Gastrocnemius medialis (tissue), 4 donors: ENCODE measurements at regions of chr16 and their contacts with region 1.

Region 1: DNA sequence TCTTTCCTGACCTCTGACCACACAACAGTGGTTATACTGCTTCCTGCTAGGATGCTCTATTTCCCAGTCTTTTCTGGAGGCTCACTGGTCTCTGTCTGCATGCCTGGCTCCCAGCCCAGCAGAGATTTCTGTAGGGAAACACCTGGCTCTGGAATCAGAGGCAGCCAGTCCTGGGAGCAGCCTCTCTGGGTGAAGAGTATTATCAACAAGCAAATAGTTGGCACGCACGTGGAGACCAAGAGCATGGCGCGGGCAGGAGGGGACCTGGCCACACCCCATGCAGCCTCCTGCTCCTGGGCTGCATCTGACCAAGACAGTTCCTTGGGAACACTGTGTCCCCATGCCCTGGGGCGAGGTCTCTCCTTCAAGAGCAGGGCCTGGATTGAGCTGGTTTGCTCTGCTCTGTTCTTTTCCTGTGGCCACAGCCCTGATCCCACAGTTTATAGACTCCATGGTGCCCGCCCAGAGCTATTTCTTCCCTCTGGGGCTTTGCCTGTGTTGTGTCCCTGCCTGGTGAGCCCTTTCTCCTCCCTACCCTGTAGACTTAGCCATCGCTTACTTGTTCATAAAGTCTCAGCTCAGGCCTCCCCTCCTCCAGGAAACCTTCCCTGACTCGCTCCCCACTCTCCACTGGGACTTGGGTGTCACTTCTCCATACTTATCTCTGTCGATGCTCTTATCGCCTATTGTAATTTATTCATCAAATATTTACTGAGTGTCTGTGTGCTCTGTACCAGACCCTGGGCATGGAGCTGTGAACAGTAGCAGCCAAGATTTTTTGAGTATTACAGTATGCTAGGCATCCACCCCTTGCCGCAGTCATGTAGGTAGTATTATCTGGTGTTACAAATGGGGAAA is 60.6 kb downstream of the SCNN1B start:
- DNase-seq: peak; percentile 64 to 68
- ATAC-seq: peak; percentile 65 to 71
- H3K4me3 ChIP-seq: no peak overlapping the region
- H3K27ac ChIP-seq: peak overlapping the region in 3 of 4 donors; percentile 66 to 78 (median 69)
- H3K4me1 ChIP-seq: peaks cover 6 to 24% of the 10 kb centered on the region in 2 donors
- H3K27me3 ChIP-seq: no peaks in the 10 kb centered on the region
- CTCF ChIP-seq: no peak
- POLR2A ChIP-seq: no peak

Region 2: GRCh38 chr16:23403547-23403946 is 40.9 kb after region 1 on chr16:
- in situ Hi-C with region 1: no loop called
- intact Hi-C with region 1: loop called (anchors 5 kb)
- DNase-seq: no peak
- ATAC-seq: no peak
- H3K4me3 ChIP-seq: no peak overlapping the region
- H3K27ac ChIP-seq: peak overlapping the region in 2 of 4 donors; percentile 25 to 34
- H3K4me1 ChIP-seq: peaks cover 11 to 23% of the 10 kb centered on the region in 2 donors
- H3K27me3 ChIP-seq: no peaks in the 10 kb centered on the region
- CTCF ChIP-seq: no peak
- POLR2A ChIP-seq: no peak

Region 3: DNA sequence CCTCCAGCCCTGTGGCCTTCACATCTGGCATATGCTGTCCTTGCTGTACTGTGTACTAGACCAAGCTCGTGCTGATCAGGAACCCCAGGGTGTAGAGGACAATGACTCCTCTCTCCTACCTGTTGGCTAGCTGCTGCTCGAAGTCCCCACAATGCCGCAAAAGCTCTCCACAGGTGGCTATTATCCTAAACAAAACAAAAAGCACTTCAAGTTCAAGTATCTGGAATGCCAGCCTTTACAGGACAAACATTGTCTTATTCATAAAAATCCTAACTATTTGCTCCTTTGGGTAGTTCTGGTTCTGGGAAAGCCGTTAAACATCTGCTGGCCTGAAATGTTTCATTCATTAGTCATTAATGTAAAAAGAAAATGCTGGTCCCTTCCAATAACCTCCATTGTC is 47.5 kb after region 1 on chr16:
- in situ Hi-C with region 1: no loop called
- intact Hi-C with region 1: loop called (anchors 5 kb)
- DNase-seq: no peak
- ATAC-seq: no peak
- H3K4me3 ChIP-seq: no peak overlapping the region
- H3K27ac ChIP-seq: no peak overlapping the region
- H3K4me1 ChIP-seq: peaks cover 15 to 17% of the 10 kb centered on the region in 2 donors
- H3K27me3 ChIP-seq: no peaks in the 10 kb centered on the region
- CTCF ChIP-seq: no peak
- POLR2A ChIP-seq: no peak

Region 4: DNA sequence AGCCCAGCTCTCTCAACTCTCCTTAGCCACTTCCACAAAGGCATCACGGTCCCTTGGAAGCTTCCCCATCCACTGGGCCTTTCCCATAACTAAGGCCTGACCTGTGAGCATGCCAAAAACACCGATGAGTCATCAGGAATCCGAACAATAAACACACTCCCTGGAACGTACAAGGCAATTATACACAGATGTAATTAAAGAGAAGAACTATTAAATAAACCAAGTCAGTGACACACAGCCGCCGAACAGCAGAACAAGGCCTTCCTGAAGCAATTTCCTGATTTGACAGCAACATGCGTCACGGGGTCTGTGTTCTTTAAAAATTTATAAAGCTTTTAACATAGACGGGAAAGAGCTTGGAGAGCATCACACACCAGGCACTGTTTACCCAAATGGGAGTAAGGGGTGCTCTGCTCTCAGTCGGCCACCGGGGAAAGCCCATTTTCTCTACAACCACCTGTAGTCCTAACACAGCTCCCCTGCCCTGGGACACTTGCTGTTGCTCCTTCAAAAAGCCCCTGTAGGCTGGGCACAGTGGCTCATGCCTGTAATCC is 60.9 kb after region 1 on chr16:
- in situ Hi-C with region 1: no loop called
- intact Hi-C with region 1: no loop called
- DNase-seq: peak; percentile 59 to 67
- ATAC-seq: peak; percentile 96 to 98
- H3K4me3 ChIP-seq: no peak overlapping the region
- H3K27ac ChIP-seq: peak overlapping the region; percentile 69 to 86 (median 77)
- H3K4me1 ChIP-seq: peaks cover 4 to 12% of the 10 kb centered on the region in 2 donors
- H3K27me3 ChIP-seq: no peaks in the 10 kb centered on the region
- CTCF ChIP-seq: no peak
- POLR2A ChIP-seq: peak; percentile 18 to 57